Activated CD8-positive, alpha-beta T cell treated with anti-CD3 and anti-CD28 coated beads for 36 hours (primary cell): ENCODE measurements at regions of chr2 and their contacts with region 1.

Region 1: GRCh38 chr2:196263181-196263747 is 91.9 kb upstream of the STK17B start:
- DNase-seq: peak; percentile 62
- ATAC-seq: peak; percentile 60
- H3K4me3 Mint-ChIP-seq: peak overlapping the region; percentile 67
- H3K27ac Mint-ChIP-seq: peak overlapping the region; percentile 90
- H3K4me1 Mint-ChIP-seq: peaks cover 79% of the 10 kb centered on the region
- H3K27me3 Mint-ChIP-seq: no peaks in the 10 kb centered on the region
- CTCF ChIP-seq: no peak

Region 2: GRCh38 chr2:196160101-196160500 is 103.2 kb before region 1 on chr2:
- CTCF ChIA-PET with region 1: interaction called, 5 read pairs
- POLR2A ChIA-PET with region 1: interaction called, 56 read pairs
- intact Hi-C with region 1: no loop called
- DNase-seq: peak; percentile 84
- ATAC-seq: peak; percentile 40
- H3K4me3 Mint-ChIP-seq: peak overlapping the region; percentile 99
- H3K27ac Mint-ChIP-seq: peak overlapping the region; percentile 83
- H3K4me1 Mint-ChIP-seq: peaks cover 49% of the 10 kb centered on the region
- H3K27me3 Mint-ChIP-seq: no peaks in the 10 kb centered on the region
- CTCF ChIP-seq: no peak

Region 3: GRCh38 chr2:196182439-196183171 is 80.7 kb before region 1 on chr2:
- CTCF ChIA-PET with region 1: interaction called, 3 read pairs
- POLR2A ChIA-PET with region 1: interaction called, 49 read pairs
- intact Hi-C with region 1: no loop called
- DNase-seq: no peak
- ATAC-seq: peak; percentile 61
- H3K4me3 Mint-ChIP-seq: peak overlapping the region; percentile 76
- H3K27ac Mint-ChIP-seq: peak overlapping the region; percentile 93
- H3K4me1 Mint-ChIP-seq: peaks cover 76% of the 10 kb centered on the region
- H3K27me3 Mint-ChIP-seq: no peaks in the 10 kb centered on the region
- CTCF ChIP-seq: no peak

Region 4: DNA sequence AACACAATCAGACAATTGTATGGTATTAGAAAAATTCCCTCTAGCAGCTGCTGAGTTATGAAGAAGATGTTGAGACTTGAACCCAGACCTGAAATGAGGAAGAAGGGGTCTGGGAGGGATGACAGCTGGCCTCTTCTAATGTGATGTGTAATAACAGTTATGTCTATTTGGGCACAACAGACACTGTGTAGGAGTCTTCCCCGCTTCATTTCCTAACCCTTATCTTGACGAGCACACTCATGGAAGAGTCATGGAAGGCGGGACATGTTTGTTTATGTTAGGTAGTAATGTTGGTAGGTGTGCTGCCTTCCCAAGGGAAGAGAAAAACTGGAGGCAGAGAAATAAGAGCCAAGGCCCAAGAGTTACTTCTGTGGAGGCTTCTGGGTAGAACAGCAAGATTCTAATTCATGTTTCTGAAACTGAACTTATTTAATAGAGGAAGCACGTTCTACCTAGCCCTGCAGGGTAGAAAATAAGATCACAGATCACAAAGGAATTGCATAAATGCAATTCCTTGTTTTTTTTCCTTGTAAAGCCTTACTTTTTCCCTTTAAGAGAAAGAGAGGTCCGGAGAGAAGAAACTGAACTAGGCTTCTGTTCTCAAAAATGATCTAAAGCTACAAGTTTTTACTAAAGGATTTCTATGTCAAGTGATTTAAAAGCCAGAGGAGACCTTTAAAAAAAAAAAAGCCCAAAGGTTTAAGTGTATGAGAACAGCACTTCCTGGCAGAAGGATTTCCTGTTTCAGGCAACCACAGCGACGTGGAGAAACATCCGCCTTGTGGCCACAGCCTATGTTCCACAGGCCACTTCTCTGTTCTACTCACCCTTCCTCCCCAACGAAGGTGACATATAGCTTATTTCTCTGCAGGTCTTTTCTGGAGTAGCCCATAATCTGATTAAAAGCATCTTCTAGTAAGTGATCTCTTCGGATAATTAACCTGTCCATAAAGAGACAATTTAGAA is 23.4 kb before region 1 on chr2:
- CTCF ChIA-PET with region 1: interaction called, 27 read pairs
- POLR2A ChIA-PET with region 1: interaction called, 158 read pairs
- intact Hi-C with region 1: loop called (anchors 1 kb)
- DNase-seq: peak; percentile 94
- ATAC-seq: peak; percentile 64
- H3K4me3 Mint-ChIP-seq: peak overlapping the region; percentile 81
- H3K27ac Mint-ChIP-seq: peak overlapping the region; percentile 87
- H3K4me1 Mint-ChIP-seq: peaks cover 70% of the 10 kb centered on the region
- H3K27me3 Mint-ChIP-seq: no peaks in the 10 kb centered on the region
- CTCF ChIP-seq: no peak

Region 5: DNA sequence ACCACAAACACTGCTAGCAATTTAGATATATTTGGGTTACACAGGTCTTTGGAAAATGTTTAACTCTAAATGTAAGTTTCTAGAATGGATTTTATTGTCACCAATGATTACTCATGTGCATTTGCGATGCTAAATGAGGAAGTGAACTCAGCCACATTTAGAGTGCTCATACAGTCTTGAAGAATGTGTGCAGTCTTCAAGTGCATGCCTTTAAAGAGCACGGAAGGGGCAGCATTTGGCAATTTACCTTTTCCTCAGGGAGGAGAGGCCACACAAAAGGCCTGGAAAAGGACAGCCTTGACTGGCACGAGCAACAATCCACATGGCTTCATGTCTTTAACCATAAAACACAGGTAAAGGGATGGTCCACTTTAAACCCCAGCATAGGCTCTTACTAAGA is 13.4 kb before region 1 on chr2:
- CTCF ChIA-PET with region 1: interaction called, 23 read pairs
- POLR2A ChIA-PET with region 1: interaction called, 158 read pairs
- intact Hi-C with region 1: no loop called
- DNase-seq: no peak
- ATAC-seq: peak; percentile 41
- H3K4me3 Mint-ChIP-seq: peak overlapping the region; percentile 5
- H3K27ac Mint-ChIP-seq: peak overlapping the region; percentile 82
- H3K4me1 Mint-ChIP-seq: peaks cover 83% of the 10 kb centered on the region
- H3K27me3 Mint-ChIP-seq: no peaks in the 10 kb centered on the region
- CTCF ChIP-seq: no peak

Region 6: GRCh38 chr2:196399722-196400691 is 136.7 kb after region 1 on chr2:
- CTCF ChIA-PET with region 1: no interaction called
- POLR2A ChIA-PET with region 1: no interaction called
- intact Hi-C with region 1: no loop called
- DNase-seq: no peak
- ATAC-seq: no peak
- H3K4me3 Mint-ChIP-seq: no peak overlapping the region
- H3K27ac Mint-ChIP-seq: no peak overlapping the region
- H3K4me1 Mint-ChIP-seq: no peaks in the 10 kb centered on the region
- H3K27me3 Mint-ChIP-seq: no peaks in the 10 kb centered on the region
- CTCF ChIP-seq: no peak